Natural killer cell (primary cell): ENCODE measurements at regions of chr1 and their contacts with region 1.

Region 1: DNA sequence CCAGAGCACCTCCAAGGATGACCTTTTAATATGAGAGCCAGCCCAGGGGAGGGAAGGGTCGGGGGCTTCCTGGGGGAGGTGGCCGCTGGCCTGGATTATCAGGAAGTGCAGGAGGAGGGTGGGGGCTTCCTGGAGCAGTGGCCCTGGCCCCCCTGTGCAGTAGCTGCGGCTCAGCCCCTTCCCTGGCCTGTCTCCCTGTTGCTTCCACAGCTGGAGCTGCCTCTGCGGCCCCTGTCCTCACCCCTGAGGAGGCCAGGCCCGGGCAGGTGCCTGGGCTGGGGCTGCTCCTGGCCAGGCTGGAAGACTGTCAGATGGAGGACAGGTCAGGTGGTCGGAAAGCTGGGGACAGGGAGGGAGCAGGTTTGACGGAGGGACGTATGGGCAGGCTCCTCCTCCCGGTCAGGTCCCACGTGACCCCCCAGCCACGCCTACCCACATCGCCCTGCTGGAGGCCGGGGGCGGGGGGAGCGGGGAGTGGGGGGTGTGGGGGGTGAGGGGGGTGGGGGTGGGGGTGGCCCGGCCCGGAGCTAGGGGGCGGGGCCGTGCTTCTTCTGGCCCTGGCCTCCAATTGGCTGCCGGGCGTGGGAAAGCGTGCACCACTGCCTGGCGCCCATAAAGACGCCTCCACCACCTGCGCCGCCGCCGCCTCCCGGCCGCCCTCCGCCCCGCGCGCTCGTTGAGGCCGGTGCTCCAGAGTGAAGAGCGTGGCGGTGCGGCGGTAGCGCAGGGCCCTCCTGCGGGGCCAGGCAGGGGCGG is 10.2 kb upstream of the TNFRSF14 start:
- DNase-seq: peak; percentile 85 to 95
- ATAC-seq: peak; percentile 52 to 75 (median 65)
- H3K4me3 ChIP-seq: peak overlapping the region; percentile 93
- H3K4me3 Mint-ChIP-seq: peak overlapping the region; percentile 94
- H3K27ac ChIP-seq: peak overlapping the region; percentile 97
- H3K27ac Mint-ChIP-seq: peak overlapping the region; percentile 94 to 97
- H3K4me1 ChIP-seq: peaks cover 68% of the 10 kb centered on the region
- H3K4me1 Mint-ChIP-seq: peaks cover 0 to 31% of the 10 kb centered on the region in 2 donors
- H3K27me3 ChIP-seq: no peaks in the 10 kb centered on the region
- H3K27me3 Mint-ChIP-seq: no peaks in the 10 kb centered on the region
- CTCF ChIP-seq: no peak

Region 2: GRCh38 chr1:2429780-2430591 is 116.0 kb before region 1 on chr1:
- intact Hi-C with region 1: no loop called
- DNase-seq: peak in 1 of 2 donors; percentile 26
- ATAC-seq: no peak
- H3K4me3 ChIP-seq: no peak overlapping the region
- H3K4me3 Mint-ChIP-seq: no peak overlapping the region
- H3K27ac ChIP-seq: no peak overlapping the region
- H3K27ac Mint-ChIP-seq: no peak overlapping the region
- H3K4me1 ChIP-seq: peaks cover 12% of the 10 kb centered on the region
- H3K4me1 Mint-ChIP-seq: peaks cover 0 to 15% of the 10 kb centered on the region in 2 donors
- H3K27me3 ChIP-seq: no peaks in the 10 kb centered on the region
- H3K27me3 Mint-ChIP-seq: no peaks in the 10 kb centered on the region
- CTCF ChIP-seq: no peak

Region 3: DNA sequence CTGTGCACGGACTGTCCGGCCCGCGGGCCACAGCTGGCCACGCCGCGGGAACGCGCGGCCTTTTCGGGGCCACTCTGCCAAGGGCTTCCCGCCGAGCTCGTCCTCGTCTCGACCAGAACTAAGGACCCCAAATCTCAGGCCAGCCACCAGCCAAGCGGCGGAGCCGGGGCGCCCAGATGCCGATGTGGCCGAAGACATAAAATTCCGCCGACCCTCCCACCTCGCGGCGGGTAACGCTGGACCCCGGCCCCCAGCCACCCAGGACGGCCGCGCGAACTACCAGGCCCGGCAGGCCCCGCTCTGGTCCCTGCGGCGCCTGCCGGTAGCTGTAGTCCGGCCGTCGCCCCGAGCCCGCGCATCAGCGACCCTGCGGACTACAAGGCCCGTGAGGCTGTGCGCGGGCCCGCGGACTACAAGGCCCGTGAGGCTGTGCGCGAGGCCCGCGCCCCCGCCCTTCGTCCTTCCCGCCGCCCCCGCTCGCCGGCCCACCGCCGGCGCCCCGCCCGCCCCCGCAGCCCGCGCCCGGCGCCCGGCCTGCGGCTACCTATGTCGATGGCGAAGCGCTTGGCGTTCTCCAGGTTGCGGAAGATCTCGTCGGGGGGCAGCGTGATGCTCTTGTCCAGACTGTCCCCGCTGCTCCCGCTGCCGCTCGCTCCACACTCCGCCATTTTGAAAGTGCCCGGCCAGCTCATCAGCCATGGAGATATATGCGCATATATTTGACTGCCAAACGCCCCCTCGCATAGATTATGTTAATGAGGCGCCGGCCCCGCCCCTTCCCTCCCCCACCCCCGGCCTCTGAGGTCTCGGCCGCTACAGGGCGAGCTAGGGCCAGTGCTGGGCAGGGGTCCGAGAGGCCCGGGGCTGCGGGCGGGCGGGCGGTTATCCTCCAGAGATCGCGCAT is 19.8 kb before region 1 on chr1 and contains the start of gene PANK4:
- intact Hi-C with region 1: loop called (anchors 1 kb)
- DNase-seq: peak; percentile 88 to 95
- ATAC-seq: peak; percentile 91 to 98 (median 93)
- H3K4me3 ChIP-seq: peak within 1 kb of the TSS; percentile 72
- H3K4me3 Mint-ChIP-seq: peak within 1 kb of the TSS; percentile 97
- H3K27ac ChIP-seq: peak within 1 kb of the TSS; percentile 62
- H3K27ac Mint-ChIP-seq: peak within 1 kb of the TSS; percentile 89 to 93
- H3K4me1 ChIP-seq: peaks cover 69% of the 10 kb centered on the region
- H3K4me1 Mint-ChIP-seq: peaks cover 24 to 43% of the 10 kb centered on the region in 2 donors
- H3K27me3 ChIP-seq: peaks cover 21% of the 10 kb centered on the region
- H3K27me3 Mint-ChIP-seq: peaks cover 0 to 9% of the 10 kb centered on the region in 2 donors
- CTCF ChIP-seq: no peak
- total RNA-seq, gene PANK4: 48.2 to 75.7 (median 61.8) TPM

Region 4: DNA sequence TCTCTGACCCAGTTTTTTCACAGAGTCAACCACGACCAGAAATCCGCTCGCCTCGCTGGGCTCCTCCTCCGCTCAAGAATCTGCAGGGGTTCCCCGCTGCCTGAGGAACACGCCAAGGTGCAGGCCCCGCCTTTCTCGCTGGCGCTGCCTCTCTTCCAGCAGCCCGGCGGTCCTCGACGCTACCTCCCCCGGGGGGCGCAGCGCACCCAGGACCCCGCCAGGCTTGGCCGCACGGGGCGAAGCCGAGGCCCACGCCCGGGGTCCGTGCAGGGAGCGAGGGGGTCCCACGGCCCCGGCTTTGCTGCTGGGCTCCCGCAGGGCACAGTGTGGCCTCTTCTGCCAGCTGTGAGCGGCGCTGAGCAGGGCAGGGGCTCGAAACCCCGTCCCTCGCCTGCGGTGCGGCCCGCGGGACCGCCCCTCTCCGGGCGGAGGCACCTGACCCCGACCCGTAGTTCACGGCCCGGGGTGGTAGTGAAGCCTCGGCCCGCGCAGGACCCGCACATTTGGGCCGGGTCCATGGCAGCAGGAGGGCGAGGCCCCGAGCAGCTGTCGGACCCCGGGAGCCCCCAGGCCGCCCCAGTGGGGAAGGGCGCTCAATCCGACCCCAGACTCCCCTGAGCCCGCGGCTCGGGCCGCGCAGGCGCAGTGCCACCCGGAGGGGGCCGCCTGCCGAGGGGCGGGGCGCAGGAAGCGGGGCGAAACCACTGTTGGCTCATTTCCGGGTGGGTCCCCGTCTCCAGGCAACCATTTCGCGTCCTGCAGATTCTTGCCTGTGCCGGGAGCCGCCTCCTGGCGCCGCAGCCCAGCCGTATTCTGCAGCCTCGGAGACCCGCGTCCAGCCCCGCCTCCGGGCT is 96.8 kb after region 1 on chr1:
- intact Hi-C with region 1: loop called (anchors 10 kb)
- DNase-seq: peak; percentile 95 to 97
- ATAC-seq: peak; percentile 85 to 87 (median 86)
- H3K4me3 ChIP-seq: peak overlapping the region; percentile 70
- H3K4me3 Mint-ChIP-seq: peak overlapping the region; percentile 86
- H3K27ac ChIP-seq: peak overlapping the region; percentile 96
- H3K27ac Mint-ChIP-seq: peak overlapping the region; percentile 80 to 97
- H3K4me1 ChIP-seq: peaks cover 22% of the 10 kb centered on the region
- H3K4me1 Mint-ChIP-seq: peaks cover 10 to 18% of the 10 kb centered on the region in 2 donors
- H3K27me3 ChIP-seq: no peaks in the 10 kb centered on the region
- H3K27me3 Mint-ChIP-seq: peaks cover 0 to under 1% of the 10 kb centered on the region in 2 donors
- CTCF ChIP-seq: no peak

Region 5: GRCh38 chr1:3336641-3337637 is 791.0 kb after region 1 on chr1:
- intact Hi-C with region 1: no loop called
- DNase-seq: no peak
- ATAC-seq: no peak
- H3K4me3 ChIP-seq: no peak overlapping the region
- H3K4me3 Mint-ChIP-seq: no peak overlapping the region
- H3K27ac ChIP-seq: no peak overlapping the region
- H3K27ac Mint-ChIP-seq: no peak overlapping the region
- H3K4me1 ChIP-seq: no peaks in the 10 kb centered on the region
- H3K4me1 Mint-ChIP-seq: no peaks in the 10 kb centered on the region
- H3K27me3 ChIP-seq: no peaks in the 10 kb centered on the region
- H3K27me3 Mint-ChIP-seq: peaks cover 0 to 6% of the 10 kb centered on the region in 2 donors
- CTCF ChIP-seq: no peak